Cardiac septum (tissue), 1 donor: ENCODE measurements at regions of chr1 and their contacts with region 1.

Region 1: DNA sequence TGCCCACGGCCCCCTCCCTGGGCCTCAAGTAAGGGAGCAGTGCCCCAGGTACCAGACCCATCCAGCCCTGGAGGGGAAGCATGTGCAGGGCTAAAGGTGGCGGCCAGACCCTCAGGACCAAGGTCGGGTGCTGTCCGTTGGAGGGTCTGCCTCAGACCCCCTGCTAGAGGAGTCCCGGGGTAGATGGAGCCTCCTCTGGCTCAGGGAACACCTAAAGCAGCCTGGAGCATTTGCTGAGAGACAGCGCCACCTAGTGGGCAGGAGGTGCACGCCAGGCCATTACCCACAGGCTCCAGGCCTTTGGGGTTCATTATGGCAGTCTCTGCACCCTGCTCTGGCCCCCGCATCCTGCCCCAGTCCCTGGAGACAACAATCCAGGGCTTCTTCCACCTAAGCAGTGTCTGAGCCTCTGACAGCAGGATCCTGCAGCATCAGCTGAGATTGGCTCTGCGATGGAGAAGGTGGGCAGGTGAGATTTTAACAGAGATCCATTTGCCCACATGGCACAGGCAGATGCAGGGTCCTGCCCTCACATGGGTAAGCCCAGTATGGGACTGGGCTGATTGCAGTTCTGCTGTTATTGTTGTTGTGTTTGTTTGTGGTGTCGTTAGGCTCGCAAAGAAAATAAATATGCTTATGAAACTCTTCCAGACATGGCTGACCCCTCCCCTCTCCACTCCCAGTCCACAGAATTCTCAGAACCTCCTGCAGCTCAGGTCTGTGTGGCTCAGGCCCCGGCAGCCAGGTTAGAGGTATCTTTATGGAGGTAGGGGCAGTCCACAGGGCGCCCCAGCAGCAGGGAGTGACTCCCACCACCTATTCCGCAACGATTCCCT is 42.4 kb downstream of the CTNNBIP1 start:
- DNase-seq: peak; percentile 92

Region 2: DNA sequence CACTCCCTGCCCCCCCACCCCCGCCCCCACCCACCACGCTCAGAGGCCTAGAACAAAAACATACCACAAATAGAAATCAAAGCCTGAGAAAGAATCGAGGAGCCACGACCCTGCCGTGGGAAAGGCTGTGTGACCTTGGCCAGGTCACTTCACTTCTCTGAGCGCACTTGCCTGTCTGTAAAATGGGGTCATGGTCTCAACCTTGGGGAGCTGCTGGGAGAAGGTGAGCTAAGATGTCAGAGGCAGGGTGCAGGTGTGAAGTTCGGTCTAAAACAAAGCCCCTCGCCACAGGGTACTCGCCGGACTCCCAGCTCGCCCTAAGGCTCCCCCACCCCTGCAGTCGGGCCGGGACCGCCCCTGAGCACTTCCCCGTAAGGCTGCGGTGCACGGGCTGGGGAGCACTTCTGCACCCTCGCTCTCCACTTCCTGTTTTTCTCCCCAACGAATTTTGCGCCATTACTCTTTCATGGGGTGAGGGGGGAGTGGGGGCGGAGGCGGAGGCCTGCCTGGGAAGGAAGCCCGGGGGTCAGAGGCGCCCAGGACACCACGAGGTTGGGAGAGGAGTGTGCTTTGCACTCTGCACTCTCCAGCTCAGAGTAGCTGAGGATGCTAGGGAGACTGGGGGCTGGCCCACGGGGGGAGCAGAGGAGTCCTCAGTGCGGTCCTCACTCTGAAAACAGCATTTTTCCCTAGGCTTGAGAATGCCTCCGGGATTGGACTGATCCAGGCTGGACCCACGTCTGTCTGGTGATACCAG is 238.0 kb before region 1 on chr1:
- intact Hi-C with region 1: loop called (anchors 1 kb)
- DNase-seq: peak; percentile 93

Region 3: GRCh38 chr1:9724706-9725476 is 142.7 kb before region 1 on chr1:
- intact Hi-C with region 1: loop called (anchors 5 kb)
- DNase-seq: no peak

Region 4: DNA sequence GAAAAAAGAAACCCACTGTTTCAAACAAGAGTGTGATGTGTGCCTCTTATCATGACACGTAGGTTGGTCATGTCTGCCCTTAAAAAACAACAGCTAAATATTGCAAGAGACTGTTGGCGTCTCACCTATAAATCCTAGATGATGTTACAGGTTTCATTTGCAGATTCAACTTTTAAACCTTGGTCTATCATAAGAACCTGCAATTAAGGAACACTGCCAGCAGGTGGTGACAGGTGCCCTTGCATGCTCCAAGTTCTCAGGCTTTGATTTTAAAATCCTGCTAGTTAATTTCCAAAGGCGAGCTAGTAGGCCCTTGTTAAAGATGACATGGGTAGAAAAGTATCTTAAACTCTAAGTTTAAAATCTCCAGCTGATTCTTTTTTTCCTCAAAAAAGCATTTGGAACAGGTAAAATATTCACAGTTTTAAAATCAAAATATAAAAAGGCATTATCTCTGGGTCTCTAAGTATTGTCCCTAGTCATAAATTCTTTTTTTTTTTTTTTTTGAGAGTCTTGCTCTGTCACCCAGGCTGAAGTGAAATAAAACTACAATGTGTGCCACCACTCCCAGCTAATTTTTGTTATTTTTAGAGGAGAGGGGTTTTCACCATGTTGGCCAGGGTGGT is 83.0 kb before region 1 on chr1:
- intact Hi-C with region 1: loop called (anchors 1 kb)
- DNase-seq: no peak

Region 5: DNA sequence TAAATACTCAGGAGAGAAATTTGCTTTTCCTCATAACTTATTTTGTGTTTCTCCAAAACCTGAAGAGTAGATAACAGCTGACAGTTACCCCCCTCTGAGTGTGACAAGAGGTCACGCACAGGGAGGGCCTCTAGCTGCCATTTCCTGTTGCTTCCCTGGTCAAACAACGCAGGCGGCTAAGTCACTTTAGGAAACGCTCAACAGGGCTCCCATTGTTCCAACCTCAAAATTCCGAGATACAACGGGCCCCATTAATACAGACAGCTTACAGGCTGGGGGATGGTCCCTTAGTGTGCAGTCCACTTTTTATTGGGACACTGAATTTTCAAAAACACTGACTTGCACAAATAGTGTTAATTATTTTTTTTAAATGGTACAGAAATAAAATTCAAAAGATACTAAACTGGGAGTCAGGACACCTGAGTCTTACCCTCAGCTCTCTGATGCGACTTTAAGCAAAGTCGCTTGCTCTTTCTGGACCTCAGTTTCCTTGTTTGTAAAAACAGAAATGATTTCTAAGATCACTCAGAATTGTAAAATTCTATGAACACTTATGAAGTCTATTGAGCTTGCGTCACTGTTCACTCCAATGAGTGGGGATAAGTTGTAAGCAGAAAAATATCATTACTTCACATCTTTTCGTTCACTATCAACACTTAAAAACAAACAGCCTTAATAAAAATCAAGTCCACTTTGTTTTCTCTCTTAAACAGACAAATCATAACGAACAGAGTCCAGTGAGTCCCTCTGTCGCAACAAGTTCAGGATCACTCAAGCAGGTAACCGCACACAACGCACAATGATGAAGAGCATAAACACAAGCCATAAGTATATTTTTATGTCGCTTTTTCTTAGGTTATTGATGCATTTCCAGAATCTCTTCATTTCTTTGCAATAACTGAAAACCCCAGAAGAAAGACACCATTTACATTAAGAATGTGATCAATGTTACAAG is 62.1 kb after region 1 on chr1:
- intact Hi-C with region 1: no loop called
- DNase-seq: no peak

Region 6: DNA sequence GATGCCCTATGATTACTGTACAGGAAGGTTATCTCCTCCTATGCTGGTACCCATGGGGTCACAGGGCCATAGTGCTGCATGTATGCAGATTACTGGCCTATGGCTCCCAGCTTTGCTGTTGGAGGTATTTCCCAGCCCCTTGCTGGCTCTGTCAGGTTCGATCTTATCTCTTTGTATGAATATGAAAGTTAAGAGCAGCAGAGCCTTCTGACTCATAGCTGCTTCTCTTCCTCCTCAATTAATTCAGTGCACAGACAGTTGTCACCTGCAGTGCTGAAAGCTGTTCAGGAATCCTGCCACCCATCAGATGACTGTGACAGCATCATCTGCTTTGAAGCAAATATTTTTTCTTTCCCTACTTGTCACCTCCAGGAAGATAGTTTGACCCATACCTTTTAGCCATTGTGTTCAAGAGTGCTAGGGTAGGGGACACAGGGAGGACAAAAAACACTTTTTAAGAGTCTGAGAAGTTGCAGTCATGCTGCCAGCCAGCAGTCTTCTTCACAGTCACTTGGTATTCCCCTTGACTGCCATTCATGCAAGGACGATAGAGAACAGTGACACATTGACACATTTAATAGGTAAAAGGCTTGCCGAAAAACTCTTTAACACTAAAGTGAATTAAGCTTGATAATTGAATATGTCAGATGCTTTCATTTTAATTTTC is 415.8 kb after region 1 on chr1:
- intact Hi-C with region 1: no loop called
- DNase-seq: no peak